ENCODE measurements at regions of chr10 and their contacts with region 1.

Region 1: DNA sequence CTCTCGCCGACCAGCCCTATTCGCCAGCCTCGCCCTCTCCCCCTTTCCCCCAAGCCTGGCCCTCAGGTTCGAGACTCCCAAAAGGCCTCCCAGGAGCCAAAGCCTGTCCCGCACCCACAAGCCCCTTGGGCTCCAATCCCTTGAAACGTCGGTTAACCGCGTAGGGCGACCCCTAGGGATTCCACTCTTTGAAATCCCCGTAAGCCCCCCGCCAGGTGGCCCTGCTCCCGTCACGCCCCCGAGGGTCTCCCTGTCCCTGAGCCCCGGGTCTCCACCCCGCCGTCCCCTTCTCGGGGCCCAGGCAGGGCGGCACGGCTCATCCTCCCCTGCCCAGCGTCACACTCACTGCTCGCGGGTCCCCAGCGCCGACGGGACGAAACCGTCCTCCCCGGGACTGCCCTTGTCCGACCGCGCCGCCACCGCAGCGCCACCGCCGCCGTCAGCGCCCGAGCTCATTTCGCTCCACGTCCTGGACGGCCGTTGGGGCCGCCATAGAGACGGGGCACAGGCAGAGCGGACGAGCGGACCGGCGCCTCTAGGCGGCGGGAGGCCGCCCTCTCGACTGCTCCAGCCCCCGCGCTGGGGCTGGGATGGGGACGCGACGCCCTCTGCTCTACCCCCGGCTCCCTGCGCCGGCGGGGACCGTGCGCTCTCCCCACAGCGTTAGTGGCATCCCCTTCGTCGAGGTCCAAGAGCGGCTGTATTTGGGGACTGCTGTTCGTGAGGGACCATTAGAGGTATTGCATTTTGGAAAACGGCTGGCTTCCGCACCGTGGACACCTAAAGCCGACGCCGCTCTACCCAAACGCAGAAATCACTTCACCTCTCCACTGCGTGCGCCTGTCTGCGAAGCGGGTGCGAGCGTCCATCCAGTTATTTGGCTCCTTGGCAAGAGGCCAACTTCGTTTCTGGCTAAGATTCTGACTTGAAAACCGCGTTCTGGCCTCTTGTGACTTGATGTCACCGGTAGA is at the start of gene EEF1AKMT2:
- DNase-seq: peak; percentile 98
- H3K4me3 ChIP-seq: peak within 1 kb of the TSS; percentile 74 to 96
- H3K27ac ChIP-seq: peak within 1 kb of the TSS; percentile 85 to 88
- H3K4me1 ChIP-seq: no peaks in the 10 kb centered on the region; a peak in 1 of 4 replicates
- H3K27me3 ChIP-seq: no peaks in the 10 kb centered on the region
- CTCF ChIP-seq: peak; percentile 32
- EP300 ChIP-seq: no peak; a peak in 1 of 4 replicates
- RAD21 ChIP-seq: no peak; the same call in 1 of the 2 replicates
- polyA plus RNA-seq, gene EEF1AKMT2: 13.5 and 14.0 TPM in 2 replicates

Region 2: DNA sequence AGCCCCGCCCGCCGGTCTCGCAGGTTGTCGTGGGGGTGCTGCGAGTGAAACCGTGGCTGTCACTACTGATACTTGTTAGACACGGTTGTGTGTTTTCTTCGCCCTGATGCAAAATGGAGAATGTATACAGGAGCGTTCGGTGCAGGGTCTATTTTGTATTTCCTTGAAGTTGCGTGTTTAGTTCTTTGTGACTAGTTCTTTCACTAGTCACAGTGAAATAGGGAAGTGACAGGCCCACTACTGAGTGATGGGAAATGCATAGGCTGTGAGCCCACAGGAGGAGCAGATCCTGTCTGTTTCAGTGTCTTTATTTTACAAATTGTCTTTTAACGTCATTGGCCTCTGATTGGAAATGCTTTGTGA is 10.6 kb after region 1 on chr10:
- CTCF ChIA-PET with region 1: interaction called, 7 read pairs
- POLR2A ChIA-PET with region 1: interaction called, 13 read pairs
- DNase-seq: no peak
- H3K4me3 ChIP-seq: peak overlapping the region; percentile 91 to 93
- H3K27ac ChIP-seq: peak overlapping the region in 1 of 2 experiments; percentile 65; a peak in 1 of 4 replicates
- H3K4me1 ChIP-seq: peaks cover 5 to 7% of the 10 kb centered on the region in 2 experiments; a peak in 3 of 4 replicates
- H3K27me3 ChIP-seq: no peaks in the 10 kb centered on the region
- CTCF ChIP-seq: no peak
- EP300 ChIP-seq: no peak
- RAD21 ChIP-seq: no peak

Region 3: DNA sequence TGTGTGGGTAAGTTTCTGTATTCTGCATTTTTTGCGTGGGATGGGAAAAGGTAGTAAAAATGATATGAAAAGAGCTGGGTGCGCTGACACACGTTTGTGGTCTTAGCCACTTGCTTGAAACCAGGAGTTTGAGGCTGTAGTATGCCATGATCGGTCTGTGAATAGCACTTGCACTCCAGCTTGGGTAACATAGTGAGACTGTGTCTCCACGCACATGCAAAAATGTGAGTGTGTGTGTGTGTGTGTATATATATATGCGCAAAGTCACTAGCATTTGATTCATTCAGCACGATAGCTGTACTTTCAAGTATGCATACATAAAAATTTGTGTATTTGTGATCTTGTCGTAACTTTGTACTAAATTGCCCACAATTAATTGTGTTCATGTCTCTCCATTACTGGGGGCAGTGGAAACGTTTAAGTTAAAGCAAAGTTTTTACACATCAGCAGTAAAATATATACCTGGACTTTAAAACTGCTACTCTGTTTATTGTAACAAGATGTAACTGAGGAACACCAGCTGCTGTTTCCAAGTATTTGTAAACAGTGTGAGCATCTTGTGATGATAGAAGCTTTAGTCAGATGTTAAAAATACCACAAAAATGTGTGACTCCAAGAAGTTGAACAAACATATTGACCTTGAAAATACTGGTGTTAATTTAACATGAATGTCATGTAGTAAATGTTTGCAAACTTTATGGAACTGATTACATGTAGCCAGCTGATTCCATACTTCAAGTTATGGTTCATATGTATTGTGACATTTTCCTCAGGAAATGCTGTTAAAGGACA is 151.8 kb after region 1 on chr10:
- CTCF ChIA-PET with region 1: no interaction called
- POLR2A ChIA-PET with region 1: no interaction called
- DNase-seq: no peak
- H3K4me3 ChIP-seq: no peak overlapping the region
- H3K27ac ChIP-seq: peak overlapping the region in 1 of 2 experiments; percentile 22; a peak in 1 of 4 replicates
- H3K4me1 ChIP-seq: peaks cover 0 to 8% of the 10 kb centered on the region in 2 experiments
- H3K27me3 ChIP-seq: no peaks in the 10 kb centered on the region
- CTCF ChIP-seq: no peak
- EP300 ChIP-seq: no peak
- RAD21 ChIP-seq: no peak